ENCODE measurements at regions of chr17 and their contacts with region 1.

Region 1: DNA sequence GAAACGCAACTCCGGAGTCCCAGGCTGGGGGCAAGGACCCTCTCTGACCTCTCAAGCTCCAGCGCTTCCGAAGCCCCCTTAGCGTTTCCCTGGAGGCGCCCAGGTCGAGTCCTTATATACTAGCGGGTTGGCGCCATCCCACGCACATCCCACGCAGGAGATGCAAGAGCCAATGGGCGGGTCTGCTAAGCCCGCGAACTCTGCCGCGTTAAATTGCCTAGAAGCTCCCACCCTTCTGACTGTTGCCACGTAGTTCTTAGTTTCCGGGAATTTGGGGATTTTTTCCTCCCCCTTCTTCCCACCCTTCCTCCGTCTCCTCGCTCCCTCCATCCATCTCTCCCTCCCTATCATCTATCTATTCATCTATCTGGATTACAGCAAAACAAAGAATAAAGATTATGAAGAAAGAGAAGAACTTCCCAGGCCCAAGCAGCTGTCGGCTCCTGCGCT is at the start of gene SLFN11:
- DNase-seq: peak; percentile 83 to 91 (median 83)
- H3K4me3 ChIP-seq: peak within 1 kb of the TSS; percentile 54 to 85
- H3K4me3 Mint-ChIP-seq: peak within 1 kb of the TSS; percentile 96 to 100 (median 99)
- H3K27ac ChIP-seq: peak within 1 kb of the TSS; percentile 98
- H3K27ac Mint-ChIP-seq: peak within 1 kb of the TSS; percentile 99 to 100 (median 100)
- H3K4me1 ChIP-seq: peaks cover 45% of the 10 kb centered on the region
- H3K4me1 Mint-ChIP-seq: peaks cover 32 to 71% (median 50%) of the 10 kb centered on the region in 4 donors
- H3K27me3 ChIP-seq: no peaks in the 10 kb centered on the region
- H3K27me3 Mint-ChIP-seq: no peaks in the 10 kb centered on the region
- total RNA-seq, gene SLFN11: 72.4 to 74.2 TPM

Region 2: DNA sequence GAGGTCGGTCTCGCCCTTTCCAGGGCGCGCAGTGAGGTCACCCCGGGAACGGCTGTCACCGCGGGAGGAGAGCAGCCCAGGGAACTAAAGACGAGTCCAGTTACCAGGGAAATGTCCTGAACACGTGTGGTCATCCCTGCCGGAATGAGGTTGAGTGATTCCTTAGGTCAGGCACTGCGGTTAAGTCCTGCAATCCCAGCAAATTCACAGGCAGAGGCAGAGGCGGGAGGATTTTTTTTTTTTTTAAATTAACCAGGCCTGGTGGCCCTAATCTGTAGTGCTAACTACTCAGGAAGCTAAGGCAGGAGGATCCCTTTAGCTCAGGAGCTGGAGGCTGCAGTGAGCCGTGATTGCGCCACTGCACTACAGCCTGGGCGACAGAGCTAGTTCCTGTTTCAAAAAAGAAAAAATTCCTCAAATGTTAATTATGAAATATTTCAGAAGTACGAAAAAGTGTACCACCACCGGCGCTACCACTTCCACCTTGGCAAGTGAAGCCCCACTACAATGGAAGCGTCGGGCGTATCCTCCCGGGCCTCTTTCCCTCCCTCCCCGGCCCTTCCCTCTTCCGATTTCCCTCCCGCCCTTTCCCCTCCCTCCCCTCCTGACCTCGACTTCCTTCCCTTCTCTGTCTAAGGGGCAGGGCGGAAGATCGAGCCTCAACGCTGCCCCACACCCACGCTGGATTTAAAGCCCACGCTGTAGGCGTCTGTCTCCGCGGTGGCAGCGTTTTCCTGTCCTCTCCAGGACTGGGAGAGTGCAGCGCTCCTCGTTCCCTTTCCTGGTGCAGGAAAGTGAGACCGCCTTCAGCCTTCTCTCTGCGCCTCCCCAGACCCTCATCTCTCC is 27.4 kb before region 1 on chr17:
- CTCF ChIA-PET with region 1: no interaction called
- POLR2A ChIA-PET with region 1: interaction called, 6 read pairs
- intact Hi-C with region 1: loop called (anchors 2 kb)
- DNase-seq: peak; percentile 15 to 48 (median 41)
- H3K4me3 ChIP-seq: peak overlapping the region; percentile 61 to 81
- H3K4me3 Mint-ChIP-seq: peak overlapping the region; percentile 90 to 98 (median 94)
- H3K27ac ChIP-seq: peak overlapping the region; percentile 15
- H3K27ac Mint-ChIP-seq: peak overlapping the region; percentile 65 to 95 (median 88)
- H3K4me1 ChIP-seq: peaks cover 46% of the 10 kb centered on the region
- H3K4me1 Mint-ChIP-seq: peaks cover 40 to 76% (median 53%) of the 10 kb centered on the region in 4 donors
- H3K27me3 ChIP-seq: no peaks in the 10 kb centered on the region
- H3K27me3 Mint-ChIP-seq: no peaks in the 10 kb centered on the region

Region 3: GRCh38 chr17:35432176-35433074 is 58.9 kb after region 1 on chr17 and contains the start of gene SLFN12:
- CTCF ChIA-PET with region 1: no interaction called
- POLR2A ChIA-PET with region 1: interaction called, 12 read pairs
- intact Hi-C with region 1: loop called (anchors 2 kb)
- DNase-seq: peak; percentile 67 to 74 (median 72)
- H3K4me3 ChIP-seq: peak within 1 kb of the TSS; percentile 79 to 83
- H3K4me3 Mint-ChIP-seq: peak within 1 kb of the TSS; percentile 93 to 100 (median 97)
- H3K27ac ChIP-seq: peak within 1 kb of the TSS; percentile 61
- H3K27ac Mint-ChIP-seq: peak within 1 kb of the TSS; percentile 88 to 97 (median 94)
- H3K4me1 ChIP-seq: peaks cover 44% of the 10 kb centered on the region
- H3K4me1 Mint-ChIP-seq: peaks cover 32 to 68% (median 48%) of the 10 kb centered on the region in 4 donors
- H3K27me3 ChIP-seq: no peaks in the 10 kb centered on the region
- H3K27me3 Mint-ChIP-seq: no peaks in the 10 kb centered on the region
- total RNA-seq, gene SLFN12: 6.5 to 8.9 TPM